ENCODE measurements at regions of chr19 and their contacts with region 1.

Region 1: GRCh38 chr19:48993175-48994034 is at the starts of genes GYS1 and RUVBL2:
- H3K4me3 ChIP-seq: peak within 1 kb of the TSS; percentile 81
- H3K27ac ChIP-seq: peak within 1 kb of the TSS; percentile 81
- H3K4me1 ChIP-seq: peaks cover 12% of the 10 kb centered on the region; the same call in 1 of the 2 replicates
- CTCF ChIP-seq: peak; percentile 100

Region 2: DNA sequence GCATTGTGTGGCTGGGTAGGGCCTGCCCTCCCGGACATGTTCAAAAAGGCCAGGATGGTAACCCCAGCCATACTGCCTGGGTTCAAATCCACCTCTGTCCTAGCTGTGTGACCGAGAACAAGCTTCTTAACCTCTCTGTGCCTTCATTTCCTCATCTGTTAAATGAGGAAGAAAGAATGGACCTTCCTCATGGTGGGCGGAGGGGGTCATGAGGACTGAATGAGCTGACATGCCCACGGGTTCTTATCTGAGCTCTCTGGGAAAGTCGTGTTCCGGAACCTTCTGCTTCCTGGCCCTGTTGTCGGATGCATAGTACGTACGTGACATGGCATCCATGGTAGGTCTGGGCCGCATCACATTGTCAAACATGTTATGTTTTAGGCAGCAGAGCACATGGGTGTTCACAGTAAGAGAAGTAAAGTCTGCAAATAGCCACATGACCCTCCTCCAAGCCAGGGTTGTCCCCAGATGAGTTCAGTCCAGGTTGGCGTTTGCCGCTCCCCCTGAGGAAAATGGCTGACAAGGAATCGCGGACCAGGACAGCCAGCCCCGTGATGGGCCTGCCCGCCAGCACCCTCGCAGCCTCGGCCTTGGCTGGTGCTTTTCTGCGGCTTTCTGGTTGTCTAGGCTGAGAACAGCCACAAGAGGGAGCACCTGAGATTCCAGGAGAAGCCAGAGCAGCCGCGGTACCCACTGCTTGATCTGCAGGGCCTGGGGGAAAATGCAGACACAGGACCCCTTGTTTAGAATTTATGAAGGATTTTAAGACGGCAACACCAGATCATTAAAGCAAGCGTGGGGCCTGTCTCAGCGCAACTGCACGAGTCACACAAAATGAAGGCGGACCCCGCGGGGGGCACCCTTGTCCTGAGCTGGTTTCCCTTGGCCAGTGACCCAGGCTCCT is 318.2 kb before region 1 on chr19:
- CTCF ChIA-PET with region 1: no interaction called
- POLR2A ChIA-PET with region 1: no interaction called
- H3K4me3 ChIP-seq: no peak overlapping the region
- H3K27ac ChIP-seq: no peak overlapping the region
- H3K4me1 ChIP-seq: no peaks in the 10 kb centered on the region; the same call in 1 of the 2 replicates
- CTCF ChIP-seq: peak; percentile 90

Region 3: GRCh38 chr19:48795055-48795684 is 198.2 kb before region 1 on chr19:
- CTCF ChIA-PET with region 1: interaction called, 10 read pairs
- POLR2A ChIA-PET with region 1: interaction called, 5 read pairs
- H3K4me3 ChIP-seq: peak overlapping the region; percentile 54
- H3K27ac ChIP-seq: no peak overlapping the region; the same call in 1 of the 2 replicates
- H3K4me1 ChIP-seq: no peaks in the 10 kb centered on the region
- CTCF ChIP-seq: peak; percentile 99

Region 4: GRCh38 chr19:48907671-48908070 is 85.7 kb before region 1 on chr19:
- CTCF ChIA-PET with region 1: no interaction called
- POLR2A ChIA-PET with region 1: no interaction called
- H3K4me3 ChIP-seq: no peak overlapping the region
- H3K27ac ChIP-seq: no peak overlapping the region
- H3K4me1 ChIP-seq: no peaks in the 10 kb centered on the region
- CTCF ChIP-seq: no peak

Region 5: GRCh38 chr19:48946463-48947257 is 46.7 kb before region 1 on chr19:
- CTCF ChIA-PET with region 1: no interaction called
- POLR2A ChIA-PET with region 1: no interaction called
- H3K4me3 ChIP-seq: no peak overlapping the region
- H3K27ac ChIP-seq: no peak overlapping the region
- H3K4me1 ChIP-seq: no peaks in the 10 kb centered on the region
- CTCF ChIP-seq: no peak

Region 6: DNA sequence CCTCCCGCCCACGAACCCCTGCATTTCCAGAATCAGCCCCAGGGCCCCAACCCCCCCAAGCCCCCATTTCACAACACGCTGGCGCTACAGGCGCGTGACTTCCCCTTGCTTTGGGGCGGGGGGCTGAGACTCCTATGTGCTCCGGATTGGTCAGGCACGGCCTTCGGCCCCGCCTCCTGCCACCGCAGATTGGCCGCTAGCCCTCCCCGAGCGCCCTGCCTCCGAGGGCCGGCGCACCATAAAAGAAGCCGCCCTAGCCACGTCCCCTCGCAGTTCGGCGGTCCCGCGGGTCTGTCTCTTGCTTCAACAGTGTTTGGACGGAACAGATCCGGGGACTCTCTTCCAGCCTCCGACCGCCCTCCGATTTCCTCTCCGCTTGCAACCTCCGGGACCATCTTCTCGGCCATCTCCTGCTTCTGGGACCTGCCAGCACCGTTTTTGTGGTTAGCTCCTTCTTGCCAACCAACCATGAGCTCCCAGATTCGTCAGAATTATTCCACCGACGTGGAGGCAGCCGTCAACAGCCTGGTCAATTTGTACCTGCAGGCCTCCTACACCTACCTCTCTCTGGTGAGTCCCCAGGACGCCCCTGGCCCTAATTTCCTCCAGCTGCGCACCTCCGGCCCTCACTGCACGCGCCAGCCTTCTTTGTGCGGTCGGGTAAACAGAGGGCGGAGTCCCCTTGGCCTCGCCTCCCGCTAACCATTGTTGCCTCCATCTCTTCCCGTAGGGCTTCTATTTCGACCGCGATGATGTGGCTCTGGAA is 28.2 kb before region 1 on chr19 and contains the start of gene FTL:
- CTCF ChIA-PET with region 1: interaction called, 25 read pairs
- POLR2A ChIA-PET with region 1: interaction called, 16 read pairs
- H3K4me3 ChIP-seq: peak within 1 kb of the TSS; percentile 40
- H3K27ac ChIP-seq: peak within 1 kb of the TSS; percentile 82
- H3K4me1 ChIP-seq: peaks cover 20% of the 10 kb centered on the region
- CTCF ChIP-seq: 0 out of 2 replicates have a peak, but pooled peaks have one; percentile 12

Region 7: GRCh38 chr19:48982280-48982679 is 11.1 kb before region 1 on chr19:
- CTCF ChIA-PET with region 1: interaction called, 79 read pairs
- POLR2A ChIA-PET with region 1: interaction called, 30 read pairs
- H3K4me3 ChIP-seq: no peak overlapping the region
- H3K27ac ChIP-seq: no peak overlapping the region
- H3K4me1 ChIP-seq: no peaks in the 10 kb centered on the region
- CTCF ChIP-seq: no peak

Region 8: DNA sequence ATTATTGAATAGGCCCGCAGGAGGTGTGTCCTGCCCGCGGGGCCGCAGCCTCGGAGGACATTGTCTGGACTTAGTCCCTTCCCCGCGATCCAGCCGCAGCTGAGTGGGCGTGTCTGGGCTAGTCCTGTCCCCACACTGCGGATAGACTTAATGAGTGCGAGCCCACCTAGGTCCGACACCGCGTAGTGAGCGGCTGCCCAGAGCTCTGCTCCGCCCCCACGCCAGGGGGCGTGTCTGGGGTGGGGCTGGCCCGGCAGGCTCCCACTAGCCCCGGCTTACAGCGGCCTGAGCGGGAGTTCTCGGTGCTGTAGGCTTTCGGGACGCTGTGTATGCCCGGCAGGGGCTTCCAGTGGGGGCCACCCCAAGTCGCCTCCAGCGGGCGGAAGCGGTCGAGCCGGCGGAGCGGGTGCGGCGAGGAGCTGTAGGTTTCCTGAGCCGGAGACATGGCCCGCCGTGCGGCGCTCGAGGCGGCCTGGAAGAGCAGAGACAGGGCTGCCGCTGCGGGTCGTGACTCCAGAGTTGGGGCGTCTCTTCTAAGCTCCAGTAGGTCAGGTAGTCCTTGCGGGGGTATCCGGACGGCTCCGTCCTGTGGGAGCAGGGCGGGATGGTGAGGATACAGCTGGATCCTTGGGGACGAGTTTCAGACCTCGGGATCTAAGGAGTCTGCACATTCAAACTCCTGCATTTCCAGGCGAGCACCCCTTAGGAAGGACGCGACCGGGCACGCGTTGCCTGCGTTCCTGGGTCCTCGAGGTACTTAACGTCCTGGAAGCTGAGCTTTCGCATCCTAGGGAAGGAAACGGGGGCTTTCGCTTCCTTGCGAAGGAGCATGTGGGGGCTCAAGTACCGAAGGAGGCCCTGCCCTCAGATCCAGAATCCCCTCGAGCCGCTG is 62.9 kb after region 1 on chr19:
- CTCF ChIA-PET with region 1: interaction called, 11 read pairs
- POLR2A ChIA-PET with region 1: interaction called, 9 read pairs
- H3K4me3 ChIP-seq: peak overlapping the region; percentile 44
- H3K27ac ChIP-seq: no peak overlapping the region; the same call in 1 of the 2 replicates
- H3K4me1 ChIP-seq: no peaks in the 10 kb centered on the region; the same call in 1 of the 2 replicates
- CTCF ChIP-seq: peak; percentile 81

Region 9: DNA sequence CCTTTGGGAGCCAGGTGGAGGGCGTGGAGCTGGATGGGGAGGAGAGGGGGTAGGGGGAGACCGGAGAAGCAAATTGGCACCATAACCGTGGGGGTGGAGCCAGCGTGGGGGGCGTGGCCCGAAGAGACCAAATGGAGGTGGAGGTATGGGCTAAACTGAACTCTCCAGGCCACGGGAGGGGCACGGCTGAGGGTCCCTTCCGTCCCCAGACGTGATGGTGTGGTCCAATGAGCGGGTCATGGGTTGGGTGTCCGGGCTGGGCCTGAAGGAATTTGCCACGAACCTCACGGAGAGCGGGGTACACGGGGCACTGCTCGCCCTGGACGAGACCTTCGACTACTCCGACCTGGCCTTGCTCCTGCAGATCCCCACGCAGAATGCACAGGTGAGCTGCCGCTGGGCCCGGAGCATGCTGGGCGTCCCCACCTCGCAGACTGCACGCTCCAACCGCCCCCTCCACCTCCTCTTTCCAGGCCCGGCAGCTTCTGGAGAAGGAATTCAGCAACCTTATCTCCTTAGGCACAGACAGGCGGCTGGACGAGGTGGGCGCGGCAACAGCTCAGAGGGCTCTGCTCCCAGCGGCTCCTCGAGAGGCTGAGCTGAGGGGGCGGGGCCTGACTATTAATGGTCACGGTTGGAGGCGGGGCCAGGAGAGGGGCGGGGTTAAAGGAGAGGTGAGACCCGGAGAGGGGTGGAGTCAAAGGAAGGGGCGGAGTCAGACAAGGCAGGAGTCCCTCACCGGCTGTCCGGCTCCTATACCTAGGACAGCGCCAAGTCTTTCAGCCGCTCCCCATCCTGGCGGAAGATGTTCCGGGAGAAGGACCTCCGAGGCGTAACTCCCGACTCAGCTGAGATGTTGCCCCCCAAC is 155.6 kb after region 1 on chr19:
- CTCF ChIA-PET with region 1: interaction called, 7 read pairs
- POLR2A ChIA-PET with region 1: interaction called, 14 read pairs
- H3K4me3 ChIP-seq: peak overlapping the region; percentile 69
- H3K27ac ChIP-seq: peak overlapping the region; percentile 70
- H3K4me1 ChIP-seq: peaks cover 6% of the 10 kb centered on the region
- CTCF ChIP-seq: no peak

Measured in HEK293 (cell line).